Activated naive CD4-positive, alpha-beta T cell treated with anti-CD3 and anti-CD28 coated beads, Interleukin-2, amount 10 ng/mL, durations not matched to agents 7 days and 5 days (primary cell): ENCODE measurements at regions of chr12 and their contacts with region 1.

Region 1: DNA sequence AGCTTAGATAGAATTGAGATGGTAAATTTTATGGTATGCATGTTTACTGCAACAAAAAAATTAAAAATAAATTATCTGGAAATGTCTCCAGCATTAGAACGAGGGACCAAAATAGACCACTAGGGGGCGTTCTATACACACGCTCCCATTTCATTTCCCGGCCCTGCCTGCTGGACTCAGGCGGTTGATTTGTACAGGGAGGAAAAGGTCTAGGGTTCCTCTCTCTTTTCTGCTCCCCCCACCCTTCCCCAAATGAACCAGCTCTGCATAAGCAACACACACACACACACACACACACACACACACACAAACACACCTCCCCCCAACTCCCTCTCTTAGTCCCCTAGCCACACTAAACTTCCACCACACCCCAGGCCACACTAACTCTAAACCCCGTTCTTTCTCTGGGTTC is 7.8 kb upstream of the DTX1 start:
- DNase-seq: peak; percentile 71
- H3K4me3 Mint-ChIP-seq: no peak overlapping the region
- H3K27ac Mint-ChIP-seq: no peak overlapping the region
- H3K4me1 Mint-ChIP-seq: no peaks in the 10 kb centered on the region
- H3K27me3 Mint-ChIP-seq: peaks cover 33% of the 10 kb centered on the region

Region 2: GRCh38 chr12:112855375-112855774 is 193.3 kb before region 1 on chr12:
- CTCF ChIA-PET with region 1: no interaction called
- DNase-seq: no peak
- H3K4me3 Mint-ChIP-seq: no peak overlapping the region
- H3K27ac Mint-ChIP-seq: no peak overlapping the region
- H3K4me1 Mint-ChIP-seq: peaks cover 1% of the 10 kb centered on the region
- H3K27me3 Mint-ChIP-seq: peaks cover 48% of the 10 kb centered on the region

Region 3: DNA sequence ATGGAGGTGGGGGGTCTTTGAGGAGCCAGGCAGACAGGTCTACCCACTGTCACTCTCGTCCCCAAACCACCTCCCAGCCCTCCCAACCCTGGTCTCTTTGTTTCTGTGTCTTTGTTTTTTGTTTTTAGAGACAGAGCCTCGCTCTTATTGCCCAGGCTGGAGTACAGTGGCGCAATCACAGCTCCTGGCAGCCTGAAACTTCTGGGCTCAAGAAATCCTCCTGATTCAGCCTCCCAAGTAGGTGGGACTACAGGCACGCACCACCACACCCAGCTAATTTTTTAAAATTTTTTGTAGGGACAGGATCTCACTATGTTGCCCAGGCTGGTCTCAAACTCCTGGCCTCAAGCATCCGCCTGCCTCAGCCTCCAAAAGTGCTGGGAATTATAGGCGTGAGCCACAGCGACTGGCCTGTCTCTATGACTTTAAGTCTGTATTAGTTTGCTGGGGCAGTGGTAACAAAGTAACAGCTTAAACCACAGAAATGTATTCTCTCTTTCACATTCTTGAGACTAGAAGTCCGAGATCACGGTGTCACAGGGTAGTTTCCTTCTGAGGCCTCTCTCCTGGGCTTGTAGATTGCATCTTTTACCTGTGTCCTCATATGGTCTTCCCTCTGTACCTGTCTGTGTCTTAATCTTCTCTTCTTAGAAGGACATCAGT is 33.9 kb after region 1 on chr12:
- CTCF ChIA-PET with region 1: no interaction called
- DNase-seq: no peak
- H3K4me3 Mint-ChIP-seq: no peak overlapping the region
- H3K27ac Mint-ChIP-seq: no peak overlapping the region
- H3K4me1 Mint-ChIP-seq: peaks cover 24% of the 10 kb centered on the region
- H3K27me3 Mint-ChIP-seq: peaks cover 23% of the 10 kb centered on the region

Region 4: GRCh38 chr12:113092607-113093408 is 44.1 kb after region 1 on chr12:
- CTCF ChIA-PET with region 1: interaction called, 33 read pairs
- DNase-seq: no peak
- H3K4me3 Mint-ChIP-seq: no peak overlapping the region
- H3K27ac Mint-ChIP-seq: no peak overlapping the region
- H3K4me1 Mint-ChIP-seq: peaks cover 29% of the 10 kb centered on the region
- H3K27me3 Mint-ChIP-seq: no peaks in the 10 kb centered on the region

Region 5: DNA sequence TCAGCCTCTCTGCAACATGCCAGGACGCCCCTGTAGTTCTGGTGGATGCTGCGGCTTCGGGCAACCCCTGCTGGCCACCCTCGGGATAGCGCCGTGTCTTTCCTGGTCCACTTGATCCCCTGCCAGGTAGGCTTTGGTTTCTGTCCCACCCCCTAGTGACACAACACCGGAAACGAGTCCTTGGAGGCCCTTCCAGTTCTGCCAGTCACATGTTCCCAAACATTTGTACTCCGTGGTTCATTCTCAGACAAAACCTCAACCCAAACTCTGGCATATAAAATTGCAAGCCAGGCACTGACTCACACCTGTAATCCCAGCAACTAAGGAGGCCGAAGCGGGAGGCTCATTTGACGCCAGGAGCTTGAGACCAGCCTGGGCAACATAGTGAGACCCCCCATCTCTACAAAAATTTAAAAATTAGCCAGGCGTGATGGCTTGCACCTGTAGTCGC is 49.7 kb after region 1 on chr12:
- CTCF ChIA-PET with region 1: interaction called, 33 read pairs
- DNase-seq: peak; percentile 76
- H3K4me3 Mint-ChIP-seq: no peak overlapping the region
- H3K27ac Mint-ChIP-seq: no peak overlapping the region
- H3K4me1 Mint-ChIP-seq: peaks cover 2% of the 10 kb centered on the region
- H3K27me3 Mint-ChIP-seq: peaks cover 4% of the 10 kb centered on the region

Region 6: DNA sequence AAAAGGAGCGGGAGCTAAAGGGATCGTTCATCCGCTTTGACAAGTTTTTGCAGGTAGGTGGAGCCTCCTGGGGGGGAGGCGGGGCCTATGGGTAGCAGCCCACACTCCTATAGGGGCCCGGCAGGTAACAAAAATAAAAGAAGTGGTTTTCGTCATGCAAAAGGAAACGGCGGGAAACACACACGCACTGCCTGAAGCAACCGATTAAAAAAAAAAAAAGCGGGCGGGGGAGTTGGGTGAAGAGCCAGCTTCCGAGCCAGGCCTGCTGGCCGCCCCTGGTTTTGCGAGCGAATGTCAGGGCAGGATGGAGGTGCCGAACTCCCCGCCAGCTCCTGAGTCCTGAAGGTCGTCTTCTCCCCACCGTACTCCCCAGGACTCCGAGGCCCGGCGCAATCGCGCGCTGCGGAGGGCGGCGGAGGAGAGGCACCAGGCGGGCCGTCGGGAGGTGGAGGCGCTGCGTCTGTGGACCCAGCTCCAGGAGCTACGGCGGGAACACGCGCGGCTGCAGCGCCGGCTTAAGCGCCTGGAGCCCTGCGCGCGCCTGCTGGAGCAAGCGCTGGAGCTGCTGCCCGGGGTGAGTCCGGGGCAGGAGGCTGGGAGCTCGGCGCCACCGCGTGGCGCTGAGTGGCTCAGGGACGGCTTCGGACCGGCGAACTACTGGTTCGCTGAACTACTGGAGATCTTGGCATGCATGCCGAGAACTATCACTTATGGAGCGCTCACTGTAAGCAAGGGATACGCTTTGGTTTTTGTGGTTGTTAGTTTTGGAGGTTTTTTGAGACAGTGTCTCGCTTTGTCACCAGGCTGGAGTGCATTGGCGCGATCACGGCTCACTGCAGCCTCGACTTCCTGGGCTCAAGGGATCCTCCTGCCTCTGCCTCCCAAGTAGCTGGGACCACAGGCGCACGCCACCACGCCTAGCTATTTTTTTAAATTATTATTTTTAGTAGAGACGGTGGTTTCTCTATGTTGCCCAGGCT is 104.4 kb after region 1 on chr12:
- CTCF ChIA-PET with region 1: interaction called, 19 read pairs
- DNase-seq: peak; percentile 77
- H3K4me3 Mint-ChIP-seq: peak overlapping the region; percentile 74
- H3K27ac Mint-ChIP-seq: peak overlapping the region; percentile 80
- H3K4me1 Mint-ChIP-seq: peaks cover 42% of the 10 kb centered on the region
- H3K27me3 Mint-ChIP-seq: peaks cover 65% of the 10 kb centered on the region

Region 7: GRCh38 chr12:113174461-113175384 is 126.0 kb after region 1 on chr12:
- CTCF ChIA-PET with region 1: interaction called, 28 read pairs
- DNase-seq: peak; percentile 82
- H3K4me3 Mint-ChIP-seq: no peak overlapping the region
- H3K27ac Mint-ChIP-seq: no peak overlapping the region
- H3K4me1 Mint-ChIP-seq: no peaks in the 10 kb centered on the region
- H3K27me3 Mint-ChIP-seq: no peaks in the 10 kb centered on the region